Activated CD4-positive, alpha-beta T cell treated with anti-CD3 and anti-CD28 coated beads for 36 hours (primary cell): ENCODE measurements at regions of chr18 and their contacts with region 1.

Region 1: DNA sequence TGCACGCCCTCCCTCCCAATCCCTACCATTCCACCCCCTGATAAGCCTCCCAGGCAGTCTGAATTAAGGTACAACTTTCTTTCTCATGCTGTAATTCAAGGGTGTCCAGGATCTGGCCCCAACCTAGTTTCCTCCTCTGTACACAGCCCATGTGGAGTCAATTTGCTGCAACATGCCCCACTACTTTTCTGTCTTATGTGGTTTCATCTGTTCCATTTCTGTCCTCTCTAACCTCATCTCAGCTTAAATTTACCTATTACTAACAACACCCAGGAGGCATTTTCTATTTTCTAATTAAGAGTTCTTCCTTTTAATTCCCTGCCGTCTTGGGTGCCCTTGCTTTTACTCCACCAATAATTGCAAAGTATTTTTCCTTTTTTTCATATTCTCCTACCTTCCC is 10.0 kb downstream of the PPP4R1 start:
- DNase-seq: no peak
- ATAC-seq: no peak
- H3K4me3 Mint-ChIP-seq: no peak overlapping the region
- H3K27ac Mint-ChIP-seq: no peak overlapping the region
- H3K4me1 Mint-ChIP-seq: peaks cover 21% of the 10 kb centered on the region
- H3K27me3 Mint-ChIP-seq: no peaks in the 10 kb centered on the region

Region 2: GRCh38 chr18:9552191-9552590 is 52.2 kb before region 1 on chr18:
- CTCF ChIA-PET with region 1: interaction called, 6 read pairs
- POLR2A ChIA-PET with region 1: no interaction called
- intact Hi-C with region 1: loop called in 1 of 2 experiments (anchors 5 kb)
- DNase-seq: no peak
- ATAC-seq: no peak
- H3K4me3 Mint-ChIP-seq: no peak overlapping the region
- H3K27ac Mint-ChIP-seq: no peak overlapping the region
- H3K4me1 Mint-ChIP-seq: no peaks in the 10 kb centered on the region
- H3K27me3 Mint-ChIP-seq: no peaks in the 10 kb centered on the region

Region 3: DNA sequence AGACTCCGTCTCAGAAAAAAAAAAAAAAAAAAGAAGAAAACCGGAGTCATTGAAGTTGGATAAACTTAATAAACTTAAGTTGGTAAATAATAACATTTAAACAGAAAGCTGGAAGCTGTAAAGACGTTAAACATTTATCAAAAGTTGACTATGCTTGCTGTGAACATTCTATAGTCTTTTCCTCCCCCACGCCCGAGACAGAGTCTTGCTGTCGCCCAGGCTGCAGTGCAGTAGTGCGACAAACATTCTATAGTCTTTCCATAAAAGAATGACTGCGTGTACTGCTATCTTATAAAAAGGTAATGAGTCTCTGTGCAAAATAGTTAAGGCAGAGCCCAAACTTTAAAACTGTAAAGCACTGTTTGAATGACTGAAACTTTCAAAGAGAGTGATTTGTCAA is 35.2 kb before region 1 on chr18:
- CTCF ChIA-PET with region 1: no interaction called
- POLR2A ChIA-PET with region 1: no interaction called
- intact Hi-C with region 1: no loop called
- DNase-seq: no peak
- ATAC-seq: no peak
- H3K4me3 Mint-ChIP-seq: no peak overlapping the region
- H3K27ac Mint-ChIP-seq: no peak overlapping the region
- H3K4me1 Mint-ChIP-seq: no peaks in the 10 kb centered on the region
- H3K27me3 Mint-ChIP-seq: no peaks in the 10 kb centered on the region